Right cardiac atrium (tissue), 5 donors: ENCODE measurements at regions of chr3 and their contacts with region 1.

Region 1: GRCh38 chr3:121749276-121750086 is at the start of gene GOLGB1:
- DNase-seq: peak; percentile 93 to 96 (median 95)
- ATAC-seq: peak; percentile 98 to 99
- H3K4me3 ChIP-seq: peak within 1 kb of the TSS; percentile 72
- H3K27ac ChIP-seq: peak within 1 kb of the TSS; percentile 91
- H3K4me1 ChIP-seq: peaks cover 3% of the 10 kb centered on the region
- H3K27me3 ChIP-seq: no peaks in the 10 kb centered on the region
- total RNA-seq, gene GOLGB1: 52.8 to 60.8 (median 58.4) TPM

Region 2: DNA sequence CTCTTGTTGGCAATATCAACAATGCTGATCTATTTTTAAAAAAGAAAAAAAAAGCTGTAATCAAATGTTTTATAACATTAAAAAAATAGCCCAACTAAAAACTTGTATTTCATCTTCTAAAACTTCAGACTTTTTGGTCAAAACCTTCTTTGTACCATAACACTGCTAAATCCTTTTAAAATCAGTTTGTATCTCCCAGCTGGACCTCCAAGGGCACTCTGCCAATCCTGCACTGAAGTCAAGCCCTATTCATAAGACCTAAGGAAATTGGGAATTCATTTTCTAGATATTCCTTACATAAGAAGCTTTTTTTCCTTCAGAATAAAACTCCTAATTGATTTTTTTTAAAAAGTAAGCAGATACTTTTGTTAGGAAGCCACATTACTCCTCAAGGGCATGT is 50.6 kb before region 1 on chr3:
- intact Hi-C with region 1: loop called in 1 of 4 experiments (anchors 5 kb)
- DNase-seq: peak in 2 of 3 donors; percentile 38 to 70
- ATAC-seq: peak in 1 of 2 donors; percentile 49
- H3K4me3 ChIP-seq: no peak overlapping the region
- H3K27ac ChIP-seq: no peak overlapping the region
- H3K4me1 ChIP-seq: peaks cover 4% of the 10 kb centered on the region
- H3K27me3 ChIP-seq: no peaks in the 10 kb centered on the region